HAP-1 (cell line): ENCODE measurements at regions of chr10 and their contacts with region 1.

Region 1: GRCh38 chr10:49400365-49400764 is 4.5 kb upstream of the DRGX start:
- DNase-seq: no peak
- H3K4me3 ChIP-seq: no peak overlapping the region
- H3K4me1 ChIP-seq: no peaks in the 10 kb centered on the region
- H3K27me3 ChIP-seq: peaks cover 48% of the 10 kb centered on the region

Region 2: DNA sequence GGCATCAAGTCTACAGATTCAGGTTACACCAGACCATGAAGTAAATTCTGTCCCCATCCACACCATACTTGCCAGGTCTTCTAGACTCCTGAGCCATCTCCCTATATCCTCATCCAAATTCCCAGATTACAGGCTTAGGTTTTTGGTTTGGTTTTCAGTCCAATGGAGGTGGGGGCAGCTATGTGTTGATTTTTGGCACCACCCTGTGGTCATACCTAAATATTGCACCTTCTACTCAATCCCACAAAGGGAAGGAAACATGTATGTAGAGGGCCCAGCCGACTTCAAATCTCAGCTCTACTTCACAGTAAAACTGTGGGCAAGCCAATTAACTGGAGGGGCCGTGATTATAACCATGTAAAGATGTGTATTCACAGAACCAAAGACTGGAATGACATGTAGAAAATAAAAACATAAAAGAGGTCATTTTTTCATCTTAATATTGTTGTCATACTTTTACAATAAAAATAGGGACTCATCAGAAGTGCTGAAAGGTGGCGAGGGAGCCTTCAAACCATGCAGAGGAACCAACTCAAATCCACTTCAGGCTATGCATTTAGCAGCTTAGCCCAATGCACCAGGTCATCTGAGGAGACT is 118.7 kb after region 1 on chr10:
- in situ Hi-C with region 1: loop called (anchors 5 kb)
- DNase-seq: peak; percentile 69 to 72
- H3K4me3 ChIP-seq: no peak overlapping the region
- H3K4me1 ChIP-seq: peaks cover 32% of the 10 kb centered on the region
- H3K27me3 ChIP-seq: no peaks in the 10 kb centered on the region